PC-9 (cell line): ENCODE measurements at regions of chr17 and their contacts with region 1.

Region 1: DNA sequence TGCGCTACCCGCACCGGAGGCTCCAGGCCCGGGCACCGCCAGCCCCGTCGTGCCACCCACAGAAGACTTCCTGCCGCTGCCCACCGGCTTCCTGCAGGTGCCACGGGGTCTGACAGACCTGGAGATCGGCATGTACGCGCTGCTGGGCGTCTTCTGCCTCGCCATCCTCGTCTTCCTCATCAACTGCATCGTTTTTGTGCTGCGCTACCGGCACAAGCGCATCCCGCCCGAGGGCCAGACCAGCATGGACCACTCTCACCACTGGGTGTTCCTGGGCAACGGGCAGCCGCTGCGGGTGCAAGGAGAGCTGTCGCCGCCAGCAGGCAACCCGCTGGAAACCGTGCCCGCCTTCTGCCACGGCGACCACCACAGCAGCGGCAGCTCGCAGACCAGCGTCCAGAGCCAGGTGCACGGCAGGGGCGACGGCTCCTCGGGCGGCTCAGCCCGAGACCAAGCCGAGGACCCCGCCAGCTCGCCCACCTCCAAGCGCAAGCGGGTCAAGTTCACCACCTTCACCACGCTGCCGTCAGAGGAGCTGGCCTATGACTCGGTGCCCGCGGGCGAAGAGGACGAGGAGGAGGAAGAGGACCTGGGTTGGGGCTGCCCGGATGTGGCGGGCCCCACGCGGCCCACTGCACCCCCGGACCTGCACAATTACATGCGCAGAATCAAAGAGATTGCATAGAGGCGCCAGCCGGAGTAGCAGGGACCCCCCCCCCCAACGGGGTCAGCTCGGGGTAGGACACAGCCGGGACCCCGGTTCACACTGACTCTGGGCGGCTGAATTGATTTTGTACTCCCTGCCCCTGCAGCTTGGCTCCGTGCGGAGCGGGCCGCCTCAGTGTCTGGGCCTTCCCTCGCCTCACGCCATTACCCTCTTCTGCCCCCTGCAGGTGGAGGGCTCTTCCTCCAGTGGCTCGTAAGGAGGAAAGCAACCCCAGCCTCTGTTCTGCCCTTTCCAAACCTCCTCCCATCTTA is 58.5 kb downstream of the TMEM132E start:
- DNase-seq: peak in 1 of 2 experiments; percentile 37
- H3K4me3 ChIP-seq: no peak overlapping the region
- H3K27ac ChIP-seq: no peak overlapping the region
- H3K4me1 ChIP-seq: no peaks in the 10 kb centered on the region
- H3K27me3 ChIP-seq: peaks cover 90% of the 10 kb centered on the region
- CTCF ChIP-seq: peak; percentile 78

Region 2: GRCh38 chr17:34596920-34597319 is 40.9 kb before region 1 on chr17:
- CTCF ChIA-PET with region 1: interaction called, 10 read pairs
- POLR2A ChIA-PET with region 1: no interaction called
- intact Hi-C with region 1: no loop called
- DNase-seq: no peak
- H3K4me3 ChIP-seq: no peak overlapping the region
- H3K27ac ChIP-seq: no peak overlapping the region
- H3K4me1 ChIP-seq: no peaks in the 10 kb centered on the region
- H3K27me3 ChIP-seq: peaks cover 34% of the 10 kb centered on the region
- CTCF ChIP-seq: no peak